ENCODE measurements at regions of chr1 and their contacts with region 1.

Region 1: DNA sequence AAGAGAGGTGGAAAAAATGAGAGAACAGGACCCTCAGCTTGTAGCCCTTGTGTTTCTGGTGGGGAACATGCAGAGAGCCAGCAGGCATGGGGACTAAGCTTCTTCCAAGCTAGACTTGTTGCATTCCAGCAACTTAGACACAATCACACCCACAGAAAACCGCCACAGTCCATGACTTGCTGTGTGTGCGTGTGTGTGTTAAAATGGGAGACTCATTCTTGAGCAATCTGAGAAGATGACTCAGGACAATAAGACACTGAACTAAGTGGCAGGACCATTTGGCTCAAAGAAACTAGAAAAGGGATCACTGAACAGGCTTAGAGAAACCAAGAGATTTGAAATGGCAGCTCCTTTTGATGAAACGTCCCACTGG is 78.0 kb downstream of the HLX start:
- DNase-seq: peak; percentile 88
- H3K4me3 ChIP-seq: no peak overlapping the region
- H3K27ac ChIP-seq: no peak overlapping the region
- H3K4me1 ChIP-seq: peaks cover 12% of the 10 kb centered on the region
- H3K27me3 ChIP-seq: no peaks in the 10 kb centered on the region
- CTCF ChIP-seq: no peak

Region 2: GRCh38 chr1:220430059-220430458 is 527.2 kb before region 1 on chr1:
- CTCF ChIA-PET with region 1: no interaction called
- dilution Hi-C with region 1: no loop called
- in situ Hi-C with region 1: no loop called
- intact Hi-C with region 1: no loop called
- DNase-seq: peak; percentile 24
- H3K4me3 ChIP-seq: no peak overlapping the region
- H3K27ac ChIP-seq: no peak overlapping the region
- H3K4me1 ChIP-seq: peaks cover 8% of the 10 kb centered on the region
- H3K27me3 ChIP-seq: no peaks in the 10 kb centered on the region
- CTCF ChIP-seq: peak in 1 of 2 donors; percentile 3

Region 3: DNA sequence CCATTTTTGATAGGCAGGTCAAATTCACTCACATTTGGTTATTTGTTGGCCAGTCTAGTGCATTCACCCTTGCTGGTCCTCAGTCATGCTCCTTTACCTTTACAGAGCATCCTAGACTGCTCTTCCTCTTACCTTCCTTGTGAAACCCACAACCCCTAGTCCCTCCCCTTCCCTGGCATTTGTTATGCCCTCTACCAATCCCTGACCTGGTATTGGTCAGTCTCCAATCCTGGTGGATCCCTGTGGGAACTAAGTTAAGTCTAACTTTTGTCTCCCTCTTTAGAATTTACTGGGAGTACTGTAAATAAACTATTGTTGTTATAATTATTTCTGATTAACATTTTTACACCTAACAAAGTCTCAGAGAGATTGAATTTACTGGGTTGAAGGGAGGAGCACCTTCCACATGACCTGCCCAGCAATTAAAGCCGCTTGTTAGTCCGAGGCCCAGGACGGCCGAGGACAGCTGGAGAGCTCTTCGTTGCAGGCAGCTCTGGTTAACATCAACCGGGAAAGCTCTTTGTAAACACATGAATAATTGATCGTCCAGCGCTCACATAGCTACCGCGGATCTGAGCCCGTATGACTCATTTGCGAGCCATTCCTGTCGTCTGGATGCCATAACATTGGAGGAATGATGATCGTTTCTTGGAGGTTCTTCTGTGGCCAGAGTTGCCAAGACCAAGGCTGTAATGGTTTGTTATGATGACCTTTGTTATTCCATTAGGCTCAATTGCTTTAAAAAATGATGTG is 138.6 kb before region 1 on chr1:
- CTCF ChIA-PET with region 1: no interaction called
- dilution Hi-C with region 1: no loop called
- in situ Hi-C with region 1: no loop called
- intact Hi-C with region 1: no loop called
- DNase-seq: no peak
- H3K4me3 ChIP-seq: no peak overlapping the region
- H3K27ac ChIP-seq: no peak overlapping the region
- H3K4me1 ChIP-seq: no peaks in the 10 kb centered on the region
- H3K27me3 ChIP-seq: no peaks in the 10 kb centered on the region
- CTCF ChIP-seq: no peak

Region 4: DNA sequence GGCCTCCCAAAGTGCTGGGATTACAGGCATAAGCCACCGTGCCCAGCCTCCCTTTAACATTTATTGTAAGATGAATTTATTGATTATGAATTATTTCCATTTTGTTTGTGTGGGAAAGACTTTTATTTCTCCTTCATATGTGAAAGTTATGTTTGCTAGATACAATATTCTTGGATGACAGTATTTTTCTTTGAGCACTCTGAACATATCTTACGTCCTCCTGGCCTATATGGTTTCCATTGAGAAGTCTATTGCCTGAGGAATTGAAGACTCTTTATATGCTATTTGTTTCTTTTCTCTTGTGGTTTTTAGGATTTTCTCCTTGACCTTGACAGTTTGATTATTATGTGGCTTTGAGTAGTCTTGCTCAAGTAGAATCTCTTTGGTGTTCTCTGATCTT is 104.8 kb before region 1 on chr1:
- CTCF ChIA-PET with region 1: no interaction called
- dilution Hi-C with region 1: no loop called
- in situ Hi-C with region 1: no loop called
- intact Hi-C with region 1: no loop called
- DNase-seq: no peak
- H3K4me3 ChIP-seq: no peak overlapping the region
- H3K27ac ChIP-seq: no peak overlapping the region
- H3K4me1 ChIP-seq: no peaks in the 10 kb centered on the region
- H3K27me3 ChIP-seq: peaks cover 3% of the 10 kb centered on the region
- CTCF ChIP-seq: no peak

Region 5: GRCh38 chr1:221097479-221098383 is 140.5 kb after region 1 on chr1:
- CTCF ChIA-PET with region 1: no interaction called
- dilution Hi-C with region 1: no loop called
- in situ Hi-C with region 1: no loop called
- intact Hi-C with region 1: no loop called
- DNase-seq: peak; percentile 30
- H3K4me3 ChIP-seq: no peak overlapping the region
- H3K27ac ChIP-seq: no peak overlapping the region
- H3K4me1 ChIP-seq: no peaks in the 10 kb centered on the region
- H3K27me3 ChIP-seq: no peaks in the 10 kb centered on the region
- CTCF ChIP-seq: no peak

Region 6: GRCh38 chr1:222546548-222547259 is 1589.5 kb after region 1 on chr1:
- CTCF ChIA-PET with region 1: interaction called, 24 read pairs
- dilution Hi-C with region 1: no loop called
- in situ Hi-C with region 1: no loop called
- intact Hi-C with region 1: no loop called
- DNase-seq: peak; percentile 88
- H3K4me3 ChIP-seq: no peak overlapping the region
- H3K27ac ChIP-seq: no peak overlapping the region
- H3K4me1 ChIP-seq: peaks cover 15% of the 10 kb centered on the region
- H3K27me3 ChIP-seq: no peaks in the 10 kb centered on the region
- CTCF ChIP-seq: no peak